Tibial artery (tissue), 4 donors: ENCODE measurements at regions of chr3 and their contacts with region 1.

Region 1: GRCh38 chr3:134300515-134300914 is 49.9 kb upstream of the RYK start:
- DNase-seq: no peak
- H3K4me3 ChIP-seq: no peak overlapping the region
- H3K27ac ChIP-seq: no peak overlapping the region
- H3K4me1 ChIP-seq: peaks cover 0 to 5% (median 0%) of the 10 kb centered on the region in 4 donors
- H3K27me3 ChIP-seq: no peaks in the 10 kb centered on the region
- CTCF ChIP-seq: no peak

Region 2: GRCh38 chr3:134197681-134198261 is 102.7 kb before region 1 on chr3:
- intact Hi-C with region 1: loop called (anchors 5 kb)
- DNase-seq: no peak
- H3K4me3 ChIP-seq: no peak overlapping the region
- H3K27ac ChIP-seq: no peak overlapping the region
- H3K4me1 ChIP-seq: no peaks in the 10 kb centered on the region
- H3K27me3 ChIP-seq: no peaks in the 10 kb centered on the region
- CTCF ChIP-seq: peak; percentile 64 to 76

Region 3: DNA sequence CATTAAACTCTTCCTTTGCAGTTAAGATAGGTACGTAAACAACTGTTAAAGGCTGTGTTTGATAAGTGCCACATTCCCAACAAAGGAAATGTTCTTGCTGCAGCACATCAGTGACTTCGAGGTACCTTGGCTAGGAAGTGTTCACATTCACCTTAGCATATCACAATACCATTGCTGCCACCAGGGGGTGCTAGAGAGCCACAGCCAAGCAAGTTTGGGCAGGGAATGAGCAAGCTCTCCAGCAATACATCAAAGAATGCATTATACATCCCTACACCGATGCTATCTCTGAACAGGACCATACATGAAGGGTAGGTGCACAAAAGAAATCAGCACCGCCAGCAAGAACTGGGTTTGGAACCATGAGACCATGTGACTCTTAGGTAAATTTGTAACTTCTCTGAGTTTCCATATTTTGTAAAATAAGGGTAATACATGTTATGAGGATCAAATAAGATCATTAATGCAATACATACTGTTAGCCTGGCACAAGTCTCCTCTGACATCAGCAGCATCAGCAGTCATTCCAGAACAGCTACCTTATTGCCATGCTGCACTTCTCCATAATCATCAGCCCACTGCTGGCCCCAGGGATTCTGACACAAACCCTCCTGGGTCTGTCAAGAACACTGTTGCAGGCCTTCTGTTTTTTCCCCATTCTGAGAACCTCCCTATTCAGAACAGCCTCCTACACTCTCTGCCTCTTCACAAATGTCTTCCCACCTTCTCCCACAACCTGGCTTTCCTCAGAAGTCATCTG is 87.4 kb before region 1 on chr3:
- intact Hi-C with region 1: loop called (anchors 2 kb)
- DNase-seq: peak; percentile 81 to 86
- H3K4me3 ChIP-seq: no peak overlapping the region
- H3K27ac ChIP-seq: no peak overlapping the region
- H3K4me1 ChIP-seq: peaks cover 0 to 18% (median 9%) of the 10 kb centered on the region in 4 donors
- H3K27me3 ChIP-seq: no peaks in the 10 kb centered on the region
- CTCF ChIP-seq: peak; percentile 92 to 99